Common myeloid progenitor, CD34-positive (primary cell): ENCODE measurements at regions of chr3 and their contacts with region 1.

Region 1: GRCh38 chr3:59049671-59050331 is at the start of gene CFAP20DC:
- DNase-seq: peak; percentile 95 to 97 (median 96)
- H3K4me3 ChIP-seq: peak within 1 kb of the TSS; percentile 42 to 84 (median 65)
- H3K27ac ChIP-seq: peak within 1 kb of the TSS; percentile 55 to 57
- H3K4me1 ChIP-seq: peaks cover 3 to 12% (median 6%) of the 10 kb centered on the region in 4 experiments
- H3K27me3 ChIP-seq: no peaks in the 10 kb centered on the region

Region 2: DNA sequence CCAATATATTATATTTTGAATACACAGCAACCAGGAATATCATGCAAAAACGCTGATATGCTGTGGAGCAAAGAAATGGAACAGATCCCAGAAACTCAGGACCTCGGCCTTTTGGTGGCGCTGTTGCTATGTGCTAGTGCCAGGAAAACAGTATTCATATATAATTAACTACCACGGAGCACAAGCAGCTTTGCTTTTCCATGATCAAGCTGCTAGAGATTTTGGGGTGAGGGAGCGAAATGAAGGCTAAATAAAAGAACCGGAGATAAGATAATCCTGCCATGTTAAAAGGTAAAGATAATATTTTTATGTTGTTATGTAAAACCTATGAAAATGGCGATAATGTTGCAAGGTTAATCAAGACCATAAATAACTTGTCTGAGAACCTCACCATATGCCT is 225.5 kb before region 1 on chr3:
- CTCF ChIA-PET with region 1: interaction called, 24 read pairs
- POLR2A ChIA-PET with region 1: no interaction called
- DNase-seq: peak; percentile 46 to 70 (median 63)
- H3K4me3 ChIP-seq: no peak overlapping the region
- H3K27ac ChIP-seq: no peak overlapping the region
- H3K4me1 ChIP-seq: peaks cover 0 to 1% (median 0%) of the 10 kb centered on the region in 4 experiments
- H3K27me3 ChIP-seq: no peaks in the 10 kb centered on the region

Region 3: GRCh38 chr3:58994746-58995330 is 55.0 kb before region 1 on chr3:
- CTCF ChIA-PET with region 1: interaction called, 72 read pairs
- POLR2A ChIA-PET with region 1: no interaction called
- DNase-seq: peak; percentile 77 to 87 (median 86)
- H3K4me3 ChIP-seq: peak overlapping the region in 1 of 7 experiments; percentile 40
- H3K27ac ChIP-seq: no peak overlapping the region
- H3K4me1 ChIP-seq: peaks cover 2 to 16% (median 4%) of the 10 kb centered on the region in 4 experiments
- H3K27me3 ChIP-seq: no peaks in the 10 kb centered on the region